Activated CD4-positive, alpha-beta memory T cell treated with anti-CD3 and anti-CD28 coated beads for 36 hours (primary cell): ENCODE measurements at regions of chr3 and their contacts with region 1.

Region 1: GRCh38 chr3:186754006-186754405 is 29.4 kb upstream of the EIF4A2 start:
- DNase-seq: no peak
- H3K4me3 Mint-ChIP-seq: no peak overlapping the region
- H3K27ac Mint-ChIP-seq: peak overlapping the region; percentile 88
- H3K4me1 Mint-ChIP-seq: peaks cover 13% of the 10 kb centered on the region
- H3K27me3 Mint-ChIP-seq: peaks cover 6% of the 10 kb centered on the region

Region 2: GRCh38 chr3:186534113-186534669 is 219.8 kb before region 1 on chr3:
- CTCF ChIA-PET with region 1: no interaction called
- POLR2A ChIA-PET with region 1: no interaction called
- intact Hi-C with region 1: no loop called
- DNase-seq: peak; percentile 70
- H3K4me3 Mint-ChIP-seq: peak overlapping the region; percentile 46
- H3K27ac Mint-ChIP-seq: peak overlapping the region; percentile 95
- H3K4me1 Mint-ChIP-seq: peaks cover 89% of the 10 kb centered on the region
- H3K27me3 Mint-ChIP-seq: no peaks in the 10 kb centered on the region

Region 3: GRCh38 chr3:186643493-186643892 is 110.5 kb before region 1 on chr3:
- CTCF ChIA-PET with region 1: no interaction called
- POLR2A ChIA-PET with region 1: no interaction called
- intact Hi-C with region 1: loop called (anchors 1 kb)
- DNase-seq: peak; percentile 36
- H3K4me3 Mint-ChIP-seq: no peak overlapping the region
- H3K27ac Mint-ChIP-seq: no peak overlapping the region
- H3K4me1 Mint-ChIP-seq: peaks cover 23% of the 10 kb centered on the region
- H3K27me3 Mint-ChIP-seq: peaks cover 18% of the 10 kb centered on the region

Region 4: DNA sequence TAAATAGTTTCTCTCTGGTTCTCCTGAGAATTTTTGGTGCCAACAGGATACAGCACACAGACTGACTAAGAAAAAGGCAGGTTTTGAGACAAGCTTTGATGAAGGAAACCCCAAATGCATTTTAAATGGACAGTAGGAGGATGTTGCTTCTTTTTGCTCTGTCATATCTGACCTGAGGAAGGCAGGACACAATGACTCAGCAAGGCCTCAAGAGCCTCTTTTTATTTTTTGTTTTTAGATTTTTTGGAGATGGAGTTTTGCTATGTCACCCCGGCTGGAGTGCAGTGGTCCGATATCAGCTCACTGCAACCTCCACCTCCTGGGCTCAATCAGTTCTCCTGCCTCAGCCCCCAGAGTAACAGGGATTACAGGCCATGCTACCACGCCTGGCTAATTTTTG is 53.7 kb before region 1 on chr3:
- CTCF ChIA-PET with region 1: no interaction called
- POLR2A ChIA-PET with region 1: no interaction called
- intact Hi-C with region 1: no loop called
- DNase-seq: no peak
- H3K4me3 Mint-ChIP-seq: no peak overlapping the region
- H3K27ac Mint-ChIP-seq: no peak overlapping the region
- H3K4me1 Mint-ChIP-seq: peaks cover 4% of the 10 kb centered on the region
- H3K27me3 Mint-ChIP-seq: peaks cover 7% of the 10 kb centered on the region

Region 5: DNA sequence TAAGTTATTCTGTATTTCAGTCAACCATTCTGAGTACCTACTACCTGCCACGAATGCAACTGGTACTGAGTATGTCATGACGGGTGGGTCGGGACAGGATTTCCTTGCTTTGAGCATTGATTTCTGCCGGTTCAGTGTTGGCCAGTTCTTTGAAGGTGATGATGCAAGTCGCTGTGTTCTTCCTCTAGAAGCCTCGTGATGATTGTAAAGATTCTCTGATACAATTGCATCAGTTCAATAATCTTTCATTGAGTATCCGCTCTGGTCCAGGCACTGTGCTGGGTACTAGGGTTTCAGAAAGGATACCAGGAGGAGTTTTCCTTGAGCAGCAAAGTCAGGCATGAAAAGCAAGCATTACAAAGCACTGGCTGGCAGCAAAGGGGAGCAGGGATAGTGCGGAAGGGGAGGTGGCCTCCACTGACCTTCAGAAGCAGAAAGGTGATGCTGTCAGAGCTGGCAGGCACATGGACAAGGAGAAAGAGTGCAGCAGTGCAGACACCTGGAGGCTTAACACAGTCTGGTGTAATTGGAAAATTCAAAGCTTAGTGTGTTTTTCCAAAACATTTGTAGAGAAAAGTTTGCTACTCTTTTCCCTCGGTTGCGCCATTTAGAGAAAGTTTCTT is 285.2 kb after region 1 on chr3:
- CTCF ChIA-PET with region 1: no interaction called
- POLR2A ChIA-PET with region 1: no interaction called
- intact Hi-C with region 1: no loop called
- DNase-seq: peak; percentile 43
- H3K4me3 Mint-ChIP-seq: no peak overlapping the region
- H3K27ac Mint-ChIP-seq: peak overlapping the region; percentile 92
- H3K4me1 Mint-ChIP-seq: peaks cover 77% of the 10 kb centered on the region
- H3K27me3 Mint-ChIP-seq: no peaks in the 10 kb centered on the region

Region 6: DNA sequence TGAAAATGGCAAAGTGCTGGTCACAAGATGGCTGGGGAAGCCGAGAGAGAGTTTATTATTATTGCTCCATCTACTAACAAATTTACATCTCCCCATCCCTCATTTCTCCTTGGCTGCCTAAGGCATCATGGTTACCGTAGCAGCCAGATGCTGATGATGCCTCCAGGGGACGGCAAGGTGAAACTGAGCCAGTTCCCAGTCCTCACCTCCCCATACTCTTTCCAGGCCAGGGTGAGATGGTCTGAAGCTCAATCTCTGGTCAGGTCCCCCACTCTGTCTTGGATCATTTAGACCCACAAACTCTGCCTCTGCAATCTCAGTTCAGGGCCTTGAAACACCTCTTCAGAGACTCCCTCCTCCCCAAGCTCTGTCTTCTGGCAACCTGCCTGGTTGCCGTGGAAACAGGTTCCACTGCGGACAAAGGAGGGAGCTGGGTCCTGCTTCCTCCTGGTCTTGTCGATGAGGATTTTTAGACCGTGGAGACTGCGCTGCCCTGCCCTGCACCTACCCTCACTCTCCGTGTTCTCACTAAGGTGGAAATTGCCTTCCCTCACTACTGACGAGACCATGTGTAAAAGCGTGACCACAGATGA is 443.1 kb after region 1 on chr3 and contains the start of gene RTP1:
- CTCF ChIA-PET with region 1: no interaction called
- POLR2A ChIA-PET with region 1: no interaction called
- intact Hi-C with region 1: no loop called
- DNase-seq: no peak
- H3K4me3 Mint-ChIP-seq: no peak within 1 kb of the TSS
- H3K27ac Mint-ChIP-seq: no peak within 1 kb of the TSS
- H3K4me1 Mint-ChIP-seq: no peaks in the 10 kb centered on the region
- H3K27me3 Mint-ChIP-seq: peaks cover 11% of the 10 kb centered on the region
- total RNA-seq, gene RTP1: not detected